Gastrocnemius medialis (tissue), 4 donors: ENCODE measurements at regions of chr14 and their contacts with region 1.

Region 1: DNA sequence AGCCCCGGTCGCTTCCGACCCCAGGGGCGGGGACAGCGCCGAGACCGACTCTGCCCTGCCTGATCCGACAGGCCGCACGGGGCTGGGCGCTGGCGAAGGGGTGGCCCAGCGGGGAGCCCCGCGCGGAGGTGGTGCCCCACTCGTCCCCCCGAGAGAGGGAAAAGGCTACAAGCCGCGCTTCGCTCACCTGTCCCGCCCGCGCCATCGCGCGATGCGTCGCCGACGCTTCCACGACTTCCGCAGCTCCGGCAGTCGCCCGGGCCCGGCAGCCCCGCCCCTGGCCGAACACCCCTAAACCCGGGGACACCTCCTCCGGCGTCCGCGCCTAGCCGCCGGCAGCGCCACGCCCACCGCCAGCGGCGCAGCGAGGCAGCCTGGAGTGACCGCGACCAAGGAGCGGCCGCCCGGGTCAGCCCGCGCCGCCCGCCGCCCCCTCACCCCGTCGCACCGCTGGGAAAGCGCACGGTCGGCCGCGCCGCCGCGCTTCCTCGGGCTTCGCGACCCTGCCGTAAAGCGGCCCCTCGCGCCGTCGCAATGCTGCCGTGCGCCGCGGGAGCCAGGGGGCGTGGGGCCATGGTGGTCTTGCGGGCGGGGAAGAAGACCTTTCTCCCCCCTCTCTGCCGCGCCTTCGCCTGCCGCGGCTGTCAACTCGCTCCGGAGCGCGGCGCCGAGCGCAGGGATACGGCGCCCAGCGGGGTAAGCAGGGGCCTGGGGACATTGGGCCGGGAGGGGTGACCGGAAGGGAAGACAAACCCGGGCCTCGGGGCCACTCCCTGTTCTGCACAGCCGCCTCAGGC is at the starts of genes BAG5 and COA8:
- DNase-seq: peak; percentile 75 to 82
- ATAC-seq: peak; percentile 75 to 88
- H3K4me3 ChIP-seq: peak within 1 kb of the TSS; percentile 80 to 99 (median 92)
- H3K27ac ChIP-seq: peak within 1 kb of the TSS; percentile 88 to 97 (median 92)
- H3K4me1 ChIP-seq: peaks cover 52 to 62% of the 10 kb centered on the region in 2 donors
- H3K27me3 ChIP-seq: no peaks in the 10 kb centered on the region
- CTCF ChIP-seq: peak in 4 of 5 experiments; percentile 13 to 64 (median 40)
- POLR2A ChIP-seq: peak; percentile 86 to 95
- total RNA-seq, gene BAG5: 16.9 to 22.6 (median 21.0) TPM
- total RNA-seq, gene COA8: 56.7 to 111 (median 71.7) TPM

Region 2: DNA sequence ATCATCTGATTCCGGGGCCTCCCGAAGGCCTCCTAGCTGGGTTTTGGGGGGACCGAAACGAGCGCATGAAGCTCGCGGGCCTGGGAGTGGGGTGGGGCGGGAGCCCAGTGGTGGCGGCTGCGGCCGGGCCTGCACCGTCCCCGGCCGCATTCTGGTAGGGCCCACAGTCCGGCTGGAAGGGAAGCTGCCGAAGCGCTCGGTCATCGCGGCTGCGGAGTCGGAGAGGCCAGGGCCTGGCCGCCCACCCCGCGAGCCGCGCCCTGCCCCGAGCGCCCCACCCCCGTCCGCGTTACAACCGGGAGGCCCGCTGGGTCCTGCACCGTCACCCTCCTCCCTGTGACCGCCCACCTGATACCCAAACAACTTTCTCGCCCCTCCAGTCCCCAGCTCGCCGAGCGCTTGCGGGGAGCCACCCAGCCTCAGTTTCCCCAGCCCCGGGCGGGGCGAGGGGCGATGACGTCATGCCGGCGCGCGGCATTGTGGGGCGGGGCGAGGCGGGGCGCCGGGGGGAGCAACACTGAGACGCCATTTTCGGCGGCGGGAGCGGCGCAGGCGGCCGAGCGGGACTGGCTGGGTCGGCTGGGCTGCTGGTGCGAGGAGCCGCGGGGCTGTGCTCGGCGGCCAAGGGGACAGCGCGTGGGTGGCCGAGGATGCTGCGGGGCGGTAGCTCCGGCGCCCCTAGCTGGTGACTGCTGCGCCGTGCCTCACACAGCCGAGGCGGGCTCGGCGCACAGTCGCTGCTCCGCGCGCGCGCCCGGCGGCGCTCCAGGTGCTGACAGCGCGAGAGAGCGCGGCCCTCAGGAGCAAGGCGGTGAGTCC is 66.3 kb after region 1 on chr14 and contains the start of gene KLC1:
- in situ Hi-C with region 1: no loop called
- intact Hi-C with region 1: loop called (anchors 2 kb)
- DNase-seq: peak; percentile 69 to 80
- ATAC-seq: peak; percentile 81 to 87
- H3K4me3 ChIP-seq: peak within 1 kb of the TSS; percentile 77 to 97 (median 86)
- H3K27ac ChIP-seq: peak within 1 kb of the TSS; percentile 96 to 100 (median 98)
- H3K4me1 ChIP-seq: peaks cover 36 to 42% of the 10 kb centered on the region in 2 donors
- H3K27me3 ChIP-seq: no peaks in the 10 kb centered on the region
- CTCF ChIP-seq: no peak
- POLR2A ChIP-seq: peak; percentile 95 to 96
- total RNA-seq, gene KLC1: 217 to 398 (median 309) TPM

Region 3: GRCh38 chr14:103715052-103716000 is 152.7 kb after region 1 on chr14 and contains the starts of genes XRCC3 and ZFYVE21:
- in situ Hi-C with region 1: no loop called
- intact Hi-C with region 1: loop called (anchors 5 kb)
- DNase-seq: peak; percentile 100
- ATAC-seq: peak; percentile 94
- H3K4me3 ChIP-seq: peak within 1 kb of the TSS; percentile 61 to 79 (median 68)
- H3K27ac ChIP-seq: peak within 1 kb of the TSS; percentile 78 to 91 (median 84)
- H3K4me1 ChIP-seq: peaks cover 56 to 65% of the 10 kb centered on the region in 2 donors
- H3K27me3 ChIP-seq: no peaks in the 10 kb centered on the region
- CTCF ChIP-seq: no peak
- POLR2A ChIP-seq: peak; percentile 91 to 94
- total RNA-seq, gene XRCC3: 1.3 to 26.5 (median 3.0) TPM
- total RNA-seq, gene ZFYVE21: 16.2 to 25.8 (median 20.2) TPM

Region 4: DNA sequence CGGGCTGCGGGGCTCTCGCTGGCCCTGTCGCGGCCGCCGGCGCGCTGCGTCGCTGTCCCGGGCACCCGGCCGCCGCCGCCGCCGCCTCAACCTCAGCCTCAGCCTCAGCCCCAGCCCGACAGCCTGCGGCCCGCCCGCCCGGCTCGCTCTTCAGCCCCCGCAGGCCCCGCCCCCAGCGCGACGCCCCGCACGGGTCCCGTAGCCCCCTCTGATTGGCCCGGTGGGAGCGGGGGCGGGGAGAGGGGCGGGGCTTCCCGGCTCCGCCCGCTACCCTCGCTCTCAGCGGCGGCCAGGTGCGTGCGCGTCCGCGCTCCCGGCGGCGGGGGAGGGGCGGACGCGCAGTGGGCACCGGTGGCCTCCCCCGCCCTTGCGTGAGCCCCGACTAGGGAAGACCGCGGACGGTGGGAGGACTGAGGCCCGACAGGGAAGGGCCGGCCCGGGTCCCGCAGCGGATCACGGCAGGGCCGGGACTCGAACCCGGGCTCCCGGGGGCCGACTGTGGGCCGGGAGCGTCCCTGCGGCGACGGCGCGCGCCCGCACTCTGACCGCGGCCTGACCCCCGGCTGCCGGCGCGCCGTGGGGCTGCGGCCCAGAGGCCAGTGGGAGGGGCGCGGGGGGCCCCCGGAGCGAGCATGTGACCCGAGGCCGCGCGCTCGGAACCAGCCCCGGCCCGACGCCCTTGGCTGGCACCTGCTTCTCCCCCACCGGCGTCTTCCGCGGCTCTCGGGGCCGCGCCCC is 285.0 kb after region 1 on chr14 and contains the start of gene PPP1R13B:
- in situ Hi-C with region 1: no loop called
- intact Hi-C with region 1: loop called (anchors 2 kb)
- DNase-seq: peak; percentile 88 to 89
- ATAC-seq: peak; percentile 88 to 90
- H3K4me3 ChIP-seq: peak within 1 kb of the TSS; percentile 60 to 86 (median 76)
- H3K27ac ChIP-seq: peak within 1 kb of the TSS; percentile 73 to 87 (median 84)
- H3K4me1 ChIP-seq: peaks cover 12 to 14% of the 10 kb centered on the region in 2 donors
- H3K27me3 ChIP-seq: no peaks in the 10 kb centered on the region
- CTCF ChIP-seq: peak in 2 of 5 experiments; percentile 10 to 24
- POLR2A ChIP-seq: peak; percentile 80 to 85
- total RNA-seq, gene PPP1R13B: 10.4 to 24.6 (median 11.8) TPM

Region 5: GRCh38 chr14:103920981-103921854 is 358.6 kb after region 1 on chr14:
- in situ Hi-C with region 1: loop called in 1 of 4 experiments (anchors 25 kb)
- intact Hi-C with region 1: no loop called
- DNase-seq: peak; percentile 80 to 91
- ATAC-seq: peak; percentile 98 to 99
- H3K4me3 ChIP-seq: peak overlapping the region; percentile 75 to 98 (median 88)
- H3K27ac ChIP-seq: peak overlapping the region; percentile 83 to 93 (median 90)
- H3K4me1 ChIP-seq: peaks cover 19 to 23% of the 10 kb centered on the region in 2 donors
- H3K27me3 ChIP-seq: peaks cover 0 to 5% (median 0%) of the 10 kb centered on the region in 3 donors
- CTCF ChIP-seq: peak; percentile 92 to 99 (median 94)
- POLR2A ChIP-seq: peak; percentile 43 to 70